Activated CD4-positive, alpha-beta memory T cell treated with anti-CD3 and anti-CD28 coated beads for 36 hours (primary cell): ENCODE measurements at regions of chr16 and their contacts with region 1.

Region 1: GRCh38 chr16:53503270-53503923 is 388 bp upstream of the AKTIP start:
- DNase-seq: peak; percentile 100
- H3K4me3 Mint-ChIP-seq: peak overlapping the region; percentile 84
- H3K27ac Mint-ChIP-seq: peak overlapping the region; percentile 96
- H3K4me1 Mint-ChIP-seq: peaks cover 59% of the 10 kb centered on the region
- H3K27me3 Mint-ChIP-seq: no peaks in the 10 kb centered on the region

Region 2: DNA sequence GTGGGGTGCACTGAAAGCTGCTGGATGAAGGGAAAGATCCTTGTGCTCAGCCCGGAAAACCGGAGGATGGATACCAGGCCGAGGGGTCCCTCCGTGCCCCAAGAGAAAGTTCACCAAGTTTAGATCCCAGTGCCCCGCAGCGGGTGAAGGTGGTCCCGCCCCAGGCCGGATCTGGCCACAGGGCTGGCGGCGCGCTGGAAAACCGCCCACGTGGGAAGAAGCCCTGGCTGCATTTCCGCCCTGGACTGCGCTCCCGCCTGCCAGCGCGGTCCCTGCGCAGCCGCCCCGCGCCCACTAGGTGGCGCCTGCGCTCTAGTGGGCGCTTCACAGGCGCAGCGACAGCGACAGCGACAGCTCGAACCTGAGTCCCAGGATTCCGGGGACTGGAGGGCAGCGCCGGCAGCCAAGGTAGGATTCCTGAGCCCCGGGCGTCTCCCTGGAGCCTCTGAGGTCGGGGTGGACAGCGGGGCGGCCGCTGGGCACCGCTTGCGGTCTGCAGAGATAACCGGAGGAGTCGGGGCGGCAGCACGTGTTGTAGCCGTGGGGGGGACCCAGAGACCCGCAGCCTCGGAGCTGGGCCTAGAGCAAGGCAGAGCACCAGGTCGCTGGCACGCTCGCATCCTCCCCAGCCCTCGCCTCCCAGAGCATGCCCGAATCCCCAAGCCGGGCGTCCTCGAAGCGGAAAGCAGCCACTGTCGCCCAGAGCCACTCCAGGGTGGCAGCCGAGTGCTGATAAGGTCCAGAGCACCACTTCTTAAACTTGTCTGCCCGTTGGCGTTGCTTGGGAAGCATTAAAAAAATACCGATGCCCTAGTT is 448.5 kb before region 1 on chr16 and contains the start of gene CHD9:
- CTCF ChIA-PET with region 1: interaction called, 6 read pairs
- POLR2A ChIA-PET with region 1: no interaction called
- intact Hi-C with region 1: loop called (anchors 2 kb)
- DNase-seq: peak; percentile 80
- H3K4me3 Mint-ChIP-seq: peak within 1 kb of the TSS; percentile 78
- H3K27ac Mint-ChIP-seq: peak within 1 kb of the TSS; percentile 44
- H3K4me1 Mint-ChIP-seq: peaks cover 17% of the 10 kb centered on the region
- H3K27me3 Mint-ChIP-seq: no peaks in the 10 kb centered on the region
- total RNA-seq, gene CHD9: 15.0 to 15.5 TPM

Region 3: GRCh38 chr16:53282975-53283946 is 220.1 kb before region 1 on chr16:
- CTCF ChIA-PET with region 1: no interaction called
- POLR2A ChIA-PET with region 1: no interaction called
- intact Hi-C with region 1: loop called (anchors 10 kb)
- DNase-seq: no peak
- H3K4me3 Mint-ChIP-seq: no peak overlapping the region
- H3K27ac Mint-ChIP-seq: no peak overlapping the region
- H3K4me1 Mint-ChIP-seq: no peaks in the 10 kb centered on the region
- H3K27me3 Mint-ChIP-seq: no peaks in the 10 kb centered on the region

Region 4: GRCh38 chr16:53435066-53435688 is 68.2 kb before region 1 on chr16:
- CTCF ChIA-PET with region 1: no interaction called
- POLR2A ChIA-PET with region 1: interaction called, 16 read pairs
- intact Hi-C with region 1: loop called (anchors 1 kb)
- DNase-seq: peak; percentile 70
- H3K4me3 Mint-ChIP-seq: peak overlapping the region; percentile 90
- H3K27ac Mint-ChIP-seq: peak overlapping the region; percentile 92
- H3K4me1 Mint-ChIP-seq: peaks cover 44% of the 10 kb centered on the region
- H3K27me3 Mint-ChIP-seq: no peaks in the 10 kb centered on the region

Region 5: DNA sequence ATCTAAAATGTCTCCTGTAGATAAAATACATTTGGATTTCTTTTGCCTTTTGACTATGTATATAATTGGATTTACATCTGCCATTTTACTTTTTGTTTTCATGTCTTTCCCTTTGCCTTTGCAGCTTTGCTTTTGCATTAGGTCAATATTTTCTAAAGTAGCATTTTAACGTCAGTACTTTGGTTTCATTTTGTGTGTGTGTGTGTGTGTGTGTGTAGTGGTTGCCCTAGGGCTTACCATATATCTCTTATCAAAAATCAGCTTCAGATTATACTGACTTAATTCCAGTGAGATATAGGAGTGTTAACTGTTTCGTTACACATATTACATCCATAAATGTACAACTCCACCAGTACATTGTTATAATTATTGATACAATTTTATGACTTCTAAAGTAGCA is 26.5 kb before region 1 on chr16:
- CTCF ChIA-PET with region 1: no interaction called
- POLR2A ChIA-PET with region 1: no interaction called
- intact Hi-C with region 1: loop called (anchors 2 kb)
- DNase-seq: no peak
- H3K4me3 Mint-ChIP-seq: no peak overlapping the region
- H3K27ac Mint-ChIP-seq: peak overlapping the region; percentile 14
- H3K4me1 Mint-ChIP-seq: peaks cover 33% of the 10 kb centered on the region
- H3K27me3 Mint-ChIP-seq: no peaks in the 10 kb centered on the region

Region 6: GRCh38 chr16:53530046-53530445 is 26.6 kb after region 1 on chr16:
- CTCF ChIA-PET with region 1: interaction called, 3 read pairs
- POLR2A ChIA-PET with region 1: no interaction called
- intact Hi-C with region 1: loop called (anchors 1 kb)
- DNase-seq: no peak
- H3K4me3 Mint-ChIP-seq: no peak overlapping the region
- H3K27ac Mint-ChIP-seq: no peak overlapping the region
- H3K4me1 Mint-ChIP-seq: peaks cover 10% of the 10 kb centered on the region
- H3K27me3 Mint-ChIP-seq: no peaks in the 10 kb centered on the region

Region 7: DNA sequence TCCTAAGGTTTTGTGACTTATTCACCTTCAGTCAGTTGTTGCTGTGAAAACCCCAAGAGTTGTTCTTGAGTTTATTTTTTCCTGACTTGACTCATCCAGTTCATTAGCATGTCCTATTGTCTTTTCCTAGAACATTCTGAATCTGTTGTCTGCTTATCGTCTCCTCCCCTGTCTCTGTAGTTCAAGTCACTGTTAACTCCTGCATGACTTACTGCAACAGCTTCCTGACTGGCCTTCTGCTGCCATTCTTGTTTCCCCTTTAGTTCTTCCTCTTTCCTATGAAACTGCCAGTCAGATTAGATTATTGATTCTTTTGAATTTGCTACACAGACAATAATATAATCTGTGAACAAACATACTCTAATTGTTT is 362.1 kb after region 1 on chr16:
- CTCF ChIA-PET with region 1: no interaction called
- POLR2A ChIA-PET with region 1: no interaction called
- intact Hi-C with region 1: no loop called
- DNase-seq: no peak
- H3K4me3 Mint-ChIP-seq: no peak overlapping the region
- H3K27ac Mint-ChIP-seq: peak overlapping the region; percentile 52
- H3K4me1 Mint-ChIP-seq: peaks cover 14% of the 10 kb centered on the region
- H3K27me3 Mint-ChIP-seq: no peaks in the 10 kb centered on the region